ENCODE measurements at regions of chr10 and their contacts with region 1.

Region 1: GRCh38 chr10:112314822-112315474 is 31.7 kb downstream of the TECTB start:
- DNase-seq: peak; percentile 13 to 89
- H3K4me3 ChIP-seq: no peak overlapping the region
- H3K27ac ChIP-seq: no peak overlapping the region
- H3K4me1 ChIP-seq: no peaks in the 10 kb centered on the region
- H3K27me3 ChIP-seq: no peaks in the 10 kb centered on the region
- CTCF ChIP-seq: peak; percentile 80 to 82 (median 80)
- EP300 ChIP-seq: no peak
- POLR2A ChIP-seq: no peak
- RAD21 ChIP-seq: peak; percentile 93 to 95

Region 2: DNA sequence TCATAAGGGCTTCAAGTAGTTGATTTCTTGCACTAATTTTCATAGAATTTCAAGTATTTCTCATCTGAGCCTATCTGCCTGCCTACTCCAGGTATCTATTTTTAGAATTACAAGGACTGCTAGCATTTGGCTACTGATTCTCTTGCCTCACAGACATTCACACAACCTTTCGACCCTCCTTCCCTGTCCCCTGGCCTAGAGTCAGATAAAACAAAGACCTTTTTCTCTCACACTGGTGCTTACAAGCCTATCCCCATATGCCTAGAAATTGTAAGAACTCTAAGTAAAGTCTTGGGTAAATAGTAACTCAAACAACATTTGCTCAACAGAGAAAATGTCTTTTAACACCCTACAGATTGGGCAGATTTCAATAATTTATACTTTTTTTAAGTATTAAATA is 137.7 kb before region 1 on chr10:
- CTCF ChIA-PET with region 1: interaction called, 53 read pairs
- POLR2A ChIA-PET with region 1: interaction called, 3 read pairs
- DNase-seq: no peak
- H3K4me3 ChIP-seq: no peak overlapping the region
- H3K27ac ChIP-seq: no peak overlapping the region
- H3K4me1 ChIP-seq: no peaks in the 10 kb centered on the region; a peak in 2 of 7 replicates
- H3K27me3 ChIP-seq: no peaks in the 10 kb centered on the region
- CTCF ChIP-seq: no peak
- EP300 ChIP-seq: no peak
- POLR2A ChIP-seq: no peak
- RAD21 ChIP-seq: no peak

Region 3: DNA sequence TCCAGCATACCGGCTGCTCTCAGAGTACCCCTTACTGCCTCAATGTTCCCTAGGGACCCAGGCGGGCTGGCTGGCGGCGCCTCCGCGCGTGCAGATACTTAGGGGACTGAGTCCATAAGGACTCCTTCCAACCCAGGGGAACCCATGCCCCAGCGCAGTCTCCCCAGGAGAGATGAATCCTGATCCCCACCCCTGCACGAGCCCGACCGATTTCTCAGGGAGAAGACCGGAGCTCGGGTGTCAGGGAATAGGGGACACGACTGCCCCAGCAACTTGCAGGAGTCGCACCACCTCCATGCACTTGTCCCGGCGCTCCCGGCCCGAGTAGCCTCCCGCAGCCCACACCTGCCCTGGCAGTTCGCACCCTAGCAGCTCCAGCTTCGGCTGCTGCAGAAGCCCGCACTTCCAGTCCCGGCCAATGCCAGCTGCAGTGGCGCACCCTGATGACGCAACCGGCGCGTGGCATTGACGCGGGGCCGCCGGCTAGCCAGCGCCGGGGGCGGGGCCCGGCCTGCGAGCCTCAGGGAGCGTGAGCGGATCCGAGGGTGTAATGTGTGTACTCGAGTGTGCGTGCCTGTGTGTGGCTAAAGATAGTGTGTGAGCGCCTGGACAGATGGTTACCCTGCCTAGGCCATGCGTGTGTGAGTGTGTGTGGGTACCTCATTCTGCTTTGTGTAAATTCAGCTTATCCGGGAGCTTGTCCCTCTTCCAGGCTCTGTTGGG is 131.5 kb before region 1 on chr10 and contains the start of gene GPAM:
- CTCF ChIA-PET with region 1: interaction called, 53 read pairs
- POLR2A ChIA-PET with region 1: interaction called, 3 read pairs
- DNase-seq: peak; percentile 66 to 100
- H3K4me3 ChIP-seq: peak within 1 kb of the TSS; percentile 86 to 99 (median 91)
- H3K27ac ChIP-seq: peak within 1 kb of the TSS; percentile 88
- H3K4me1 ChIP-seq: peaks cover 0 to 7% (median 3%) of the 10 kb centered on the region in 4 experiments; a peak in 5 of 7 replicates
- H3K27me3 ChIP-seq: no peaks in the 10 kb centered on the region
- CTCF ChIP-seq: 0 out of 4 replicates have a peak, but pooled peaks of 1 of the 3 experiments have one; percentile 2
- EP300 ChIP-seq: peak in 1 of 2 experiments; percentile 77; a peak in 1 of 3 replicates
- POLR2A ChIP-seq: peak; percentile 61 to 93
- RAD21 ChIP-seq: peak; percentile 18 to 33; a peak in 2 of 4 replicates
- total RNA-seq, gene GPAM: 15.5 and 18.5 TPM in 2 replicates

Region 4: DNA sequence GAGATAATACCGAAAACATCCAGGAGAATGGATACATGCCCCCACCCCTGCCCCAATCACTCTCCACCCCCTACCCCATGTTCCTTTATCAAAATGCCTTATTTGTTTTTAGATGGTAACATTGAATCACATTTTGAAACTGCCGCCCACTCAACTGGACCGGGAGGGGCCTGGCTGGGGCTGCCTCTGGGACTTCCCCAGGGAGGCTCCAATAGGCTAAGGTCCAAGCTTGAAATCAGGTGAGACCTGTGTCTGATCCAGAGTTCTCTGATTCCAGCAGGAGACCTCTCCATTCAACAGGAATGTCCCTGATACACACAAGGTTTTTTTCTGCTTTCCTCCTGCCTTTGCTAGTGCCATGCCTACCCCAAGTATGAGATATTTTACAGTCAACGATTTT is 15.2 kb after region 1 on chr10:
- CTCF ChIA-PET with region 1: interaction called, 31 read pairs
- POLR2A ChIA-PET with region 1: no interaction called
- DNase-seq: no peak
- H3K4me3 ChIP-seq: no peak overlapping the region
- H3K27ac ChIP-seq: no peak overlapping the region
- H3K4me1 ChIP-seq: no peaks in the 10 kb centered on the region
- H3K27me3 ChIP-seq: no peaks in the 10 kb centered on the region
- CTCF ChIP-seq: no peak
- EP300 ChIP-seq: no peak
- POLR2A ChIP-seq: no peak
- RAD21 ChIP-seq: no peak

Region 5: DNA sequence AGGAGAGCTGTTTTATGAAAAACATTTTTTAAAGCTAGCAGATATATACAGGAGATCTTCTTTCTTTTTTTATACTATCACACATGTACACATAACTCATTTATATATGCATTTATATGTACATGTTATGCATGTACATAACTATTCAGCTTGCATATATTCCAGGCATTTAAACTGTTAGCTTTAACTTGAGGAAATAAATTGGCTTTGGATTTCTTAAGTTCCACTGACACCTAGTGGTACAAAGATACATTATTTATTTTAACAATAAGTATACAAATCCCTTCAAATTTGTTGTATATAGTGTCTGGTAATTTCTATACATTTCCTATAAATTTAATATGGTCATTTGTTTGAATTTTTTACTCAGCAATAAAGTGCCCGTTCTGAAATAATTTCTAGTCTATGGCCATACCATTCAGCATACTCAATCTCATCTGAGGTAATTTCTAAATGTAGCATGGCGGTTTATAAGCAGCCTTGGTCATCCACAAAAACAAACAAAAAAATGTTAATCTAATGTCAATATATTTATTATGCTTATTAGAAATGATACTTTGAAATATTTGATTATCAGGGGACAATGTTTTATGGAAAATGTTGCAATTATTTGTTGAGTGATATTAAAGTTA is 120.2 kb after region 1 on chr10:
- CTCF ChIA-PET with region 1: interaction called, 12 read pairs
- POLR2A ChIA-PET with region 1: no interaction called
- DNase-seq: no peak
- H3K4me3 ChIP-seq: no peak overlapping the region
- H3K27ac ChIP-seq: no peak overlapping the region
- H3K4me1 ChIP-seq: no peaks in the 10 kb centered on the region
- H3K27me3 ChIP-seq: no peaks in the 10 kb centered on the region
- CTCF ChIP-seq: peak in 1 of 3 experiments; percentile 7; a peak in 2 of 4 replicates
- EP300 ChIP-seq: no peak
- POLR2A ChIP-seq: no peak
- RAD21 ChIP-seq: peak in 1 of 2 experiments; percentile 46; a peak in 3 of 4 replicates